Sigmoid colon (tissue), 7 donors: ENCODE measurements at regions of chr13 and their contacts with region 1.

Region 1: DNA sequence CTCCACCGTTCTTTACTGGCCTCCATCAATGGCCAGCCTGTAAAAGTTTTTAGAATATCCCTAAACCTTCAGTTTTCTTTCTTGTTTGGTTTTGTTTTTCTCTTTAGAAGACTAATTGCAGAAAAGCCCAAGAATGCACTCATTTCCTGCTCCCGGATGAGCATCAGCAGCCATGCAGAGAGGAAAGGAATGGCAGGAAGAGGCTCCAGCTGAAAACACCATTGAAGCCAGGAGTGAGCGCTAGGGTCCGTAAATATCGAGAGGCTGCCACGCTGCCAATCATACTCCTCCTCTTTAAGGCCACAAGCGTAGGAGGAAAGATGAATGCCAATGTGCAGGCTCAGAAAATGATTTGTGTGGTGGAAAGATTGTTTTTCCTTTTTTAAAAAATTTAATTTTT is 57.4 kb upstream of the UBE2L5 start:
- DNase-seq: no peak
- H3K4me3 ChIP-seq: no peak overlapping the region
- H3K27ac ChIP-seq: no peak overlapping the region
- H3K4me1 ChIP-seq: no peaks in the 10 kb centered on the region
- H3K27me3 ChIP-seq: no peaks in the 10 kb centered on the region
- CTCF ChIP-seq: no peak
- EP300 ChIP-seq: no peak
- POLR2A ChIP-seq: no peak

Region 2: GRCh38 chr13:30114571-30115256 is 250.2 kb before region 1 on chr13:
- intact Hi-C with region 1: no loop called
- DNase-seq: peak; percentile 94
- H3K4me3 ChIP-seq: peak overlapping the region; percentile 30 to 65 (median 64)
- H3K27ac ChIP-seq: peak overlapping the region; percentile 47 to 78 (median 74)
- H3K4me1 ChIP-seq: peaks cover 0 to 53% (median 50%) of the 10 kb centered on the region in 4 donors
- H3K27me3 ChIP-seq: no peaks in the 10 kb centered on the region
- CTCF ChIP-seq: peak; percentile 79 to 90 (median 88)
- EP300 ChIP-seq: no peak
- POLR2A ChIP-seq: no peak

Region 3: GRCh38 chr13:30332456-30333143 is 32.3 kb before region 1 on chr13:
- intact Hi-C with region 1: loop called (anchors 1 kb)
- DNase-seq: no peak
- H3K4me3 ChIP-seq: no peak overlapping the region
- H3K27ac ChIP-seq: peak overlapping the region in 3 of 4 donors; percentile 68 to 81 (median 80)
- H3K4me1 ChIP-seq: peaks cover 0 to 32% (median 19%) of the 10 kb centered on the region in 4 donors
- H3K27me3 ChIP-seq: no peaks in the 10 kb centered on the region
- CTCF ChIP-seq: no peak
- EP300 ChIP-seq: no peak
- POLR2A ChIP-seq: no peak